ENCODE measurements at regions of chr16 and their contacts with region 1.

Region 1: GRCh38 chr16:84754353-84754856 is 54.6 kb downstream of the USP10 start:
- DNase-seq: peak; percentile 87
- ATAC-seq: peak; percentile 85
- H3K4me3 ChIP-seq: no peak overlapping the region
- H3K27ac ChIP-seq: no peak overlapping the region
- H3K4me1 ChIP-seq: peaks cover 11% of the 10 kb centered on the region
- H3K27me3 ChIP-seq: no peaks in the 10 kb centered on the region
- CTCF ChIP-seq: peak; percentile 76

Region 2: GRCh38 chr16:84832488-84833143 is 78.2 kb after region 1 on chr16:
- CTCF ChIA-PET with region 1: no interaction called
- POLR2A ChIA-PET with region 1: no interaction called
- intact Hi-C with region 1: no loop called
- DNase-seq: no peak
- ATAC-seq: no peak
- H3K4me3 ChIP-seq: no peak overlapping the region
- H3K27ac ChIP-seq: no peak overlapping the region
- H3K4me1 ChIP-seq: peaks cover 12% of the 10 kb centered on the region
- H3K27me3 ChIP-seq: no peaks in the 10 kb centered on the region
- CTCF ChIP-seq: no peak

Region 3: DNA sequence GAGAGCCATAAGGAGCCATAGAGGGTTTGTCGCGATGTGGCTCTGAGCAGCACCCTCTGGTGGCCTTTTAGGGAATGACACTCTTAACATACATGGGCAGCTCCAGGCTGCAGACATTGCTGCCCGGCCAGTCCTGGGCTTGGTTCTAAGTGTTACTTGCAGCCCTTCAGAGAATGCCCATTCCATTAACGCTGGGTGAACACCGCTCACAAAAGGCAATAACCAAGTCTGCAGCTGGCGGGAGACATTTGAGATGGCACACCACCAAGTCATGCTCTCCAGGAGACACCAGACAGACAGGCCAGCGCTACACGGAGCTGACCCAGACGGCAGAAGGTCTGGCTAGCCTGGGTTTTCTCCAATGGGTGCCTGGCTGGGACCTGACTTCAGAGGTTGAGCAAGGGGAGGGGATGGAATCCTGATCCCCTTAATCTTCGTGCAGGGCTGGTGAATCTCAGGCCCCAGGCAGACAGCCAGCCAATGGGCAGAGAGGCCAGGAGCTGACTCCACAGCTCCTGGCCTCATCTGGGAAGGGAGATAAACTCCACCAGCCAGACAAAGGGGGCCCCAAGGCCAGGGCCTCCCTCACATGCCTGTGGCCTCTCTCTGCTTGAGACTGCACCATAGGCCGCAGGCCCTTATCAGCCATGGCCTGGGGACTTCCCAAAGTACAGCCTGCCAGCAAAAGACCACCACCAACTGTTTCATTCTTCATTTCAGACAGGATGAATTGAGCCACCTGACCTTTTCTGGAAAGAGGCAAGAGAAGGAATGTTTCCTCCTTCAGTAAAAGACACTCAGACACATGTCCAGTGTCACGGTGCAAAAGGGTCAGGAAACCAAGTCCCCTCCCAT is 198.2 kb after region 1 on chr16:
- CTCF ChIA-PET with region 1: no interaction called
- POLR2A ChIA-PET with region 1: no interaction called
- intact Hi-C with region 1: loop called (anchors 1 kb)
- DNase-seq: peak; percentile 85
- ATAC-seq: peak; percentile 96
- H3K4me3 ChIP-seq: no peak overlapping the region
- H3K27ac ChIP-seq: no peak overlapping the region
- H3K4me1 ChIP-seq: no peaks in the 10 kb centered on the region
- H3K27me3 ChIP-seq: no peaks in the 10 kb centered on the region
- CTCF ChIP-seq: peak; percentile 70

Region 4: DNA sequence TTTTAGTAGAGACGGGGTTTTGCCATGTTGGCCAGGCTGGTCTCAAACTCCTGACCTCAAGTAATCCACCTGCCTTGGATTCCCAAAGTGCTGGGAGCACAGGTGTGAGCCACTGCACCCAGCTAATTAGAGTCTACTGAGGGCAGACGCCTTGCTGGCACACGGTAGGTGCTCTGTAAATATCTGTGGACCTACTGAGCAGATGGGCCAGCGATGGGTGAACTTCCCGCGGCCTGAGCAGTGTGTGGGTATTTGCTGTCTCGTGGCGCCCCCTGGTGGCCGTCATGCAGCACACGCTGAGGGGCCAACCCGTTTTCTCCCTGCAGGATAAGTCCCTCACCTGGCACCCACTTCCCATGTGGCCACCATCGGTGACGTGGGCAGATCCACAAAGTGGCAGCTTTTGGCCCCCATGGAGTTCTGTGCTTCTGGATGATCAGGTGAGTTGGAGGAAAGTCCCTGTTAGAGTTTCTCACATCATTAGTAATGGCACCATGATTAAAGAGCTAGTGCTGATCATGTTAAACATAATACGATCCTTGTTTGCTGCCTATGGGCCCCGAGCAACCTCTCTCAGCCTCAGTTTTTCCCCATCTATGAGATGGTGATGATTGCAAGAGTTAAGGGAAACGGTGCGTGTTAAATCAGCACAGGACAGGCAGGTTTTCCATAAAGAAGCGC is 216.2 kb after region 1 on chr16:
- CTCF ChIA-PET with region 1: interaction called, 3 read pairs
- POLR2A ChIA-PET with region 1: no interaction called
- intact Hi-C with region 1: loop called (anchors 1 kb)
- DNase-seq: peak; percentile 73
- ATAC-seq: peak; percentile 93
- H3K4me3 ChIP-seq: no peak overlapping the region
- H3K27ac ChIP-seq: no peak overlapping the region
- H3K4me1 ChIP-seq: peaks cover 10% of the 10 kb centered on the region
- H3K27me3 ChIP-seq: no peaks in the 10 kb centered on the region
- CTCF ChIP-seq: peak; percentile 85

Measured in PC-3 (cell line).